GM12878 (cell line): ENCODE measurements at regions of chr17 and their contacts with region 1.

Region 1: DNA sequence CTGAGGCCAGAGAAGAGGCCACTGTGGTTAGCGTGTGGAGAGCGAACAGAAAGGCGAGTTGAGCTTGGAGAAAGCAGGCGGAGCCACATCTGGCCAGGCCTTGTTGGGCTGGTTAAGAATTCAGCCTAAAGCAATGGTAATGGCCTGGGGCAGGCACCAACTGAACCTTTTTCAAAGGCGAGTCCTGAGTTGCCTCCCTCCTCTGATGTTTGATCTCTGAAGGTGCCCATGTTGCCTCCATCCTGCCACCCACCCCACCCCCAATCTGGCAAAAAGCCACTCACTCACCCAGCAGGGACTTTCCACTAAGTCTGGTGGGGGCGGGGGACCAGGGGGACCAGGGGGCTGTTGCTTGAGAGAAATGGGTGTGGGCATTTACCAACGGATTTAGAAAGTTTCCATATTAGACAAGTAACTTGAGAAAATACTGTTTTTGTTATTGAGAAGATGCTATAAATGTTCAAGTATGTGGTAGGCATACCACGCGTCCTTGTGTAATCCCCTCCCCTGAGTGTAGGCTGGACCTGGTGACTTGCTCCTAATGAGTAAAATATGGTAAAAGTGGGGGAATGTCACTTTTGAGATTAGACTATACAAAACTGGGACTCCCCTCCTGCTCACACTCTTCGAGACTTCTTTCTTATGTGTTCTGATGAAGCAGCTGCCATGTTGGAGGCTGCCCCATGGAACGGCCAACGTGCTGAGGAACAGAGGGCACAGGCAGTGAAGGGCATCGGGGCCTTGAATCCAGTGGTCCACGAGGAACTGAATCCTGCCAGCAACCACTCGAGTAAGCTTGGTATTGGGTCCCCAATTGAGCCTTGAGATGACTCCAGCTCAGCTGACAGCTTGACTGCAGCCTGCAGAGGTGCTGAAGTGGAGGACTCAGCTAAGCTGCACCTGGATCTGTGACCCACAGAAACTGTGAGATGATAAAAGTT is 29.9 kb upstream of the TNS4 start:
- DNase-seq: peak; percentile 71
- ATAC-seq: peak; percentile 74
- H3K4me3 ChIP-seq: no peak overlapping the region
- H3K27ac ChIP-seq: peak overlapping the region; percentile 60; the same call in 1 of the 2 replicates
- H3K4me1 ChIP-seq: peaks cover 38% of the 10 kb centered on the region
- H3K27me3 ChIP-seq: no peaks in the 10 kb centered on the region
- CTCF ChIP-seq: no peak
- EP300 ChIP-seq: peak; percentile 6 to 14; a peak in 1 of 4 replicates
- POLR2A ChIP-seq: no peak
- RAD21 ChIP-seq: no peak

Region 2: GRCh38 chr17:40283662-40284061 is 247.7 kb before region 1 on chr17:
- CTCF ChIA-PET with region 1: no interaction called
- POLR2A ChIA-PET with region 1: no interaction called
- RAD21 ChIA-PET with region 1: no interaction called
- SMC1A ChIA-PET with region 1: no interaction called
- in situ Hi-C with region 1: no loop called
- intact Hi-C with region 1: no loop called
- DNase-seq: no peak
- ATAC-seq: peak; percentile 29
- H3K4me3 ChIP-seq: no peak overlapping the region
- H3K27ac ChIP-seq: no peak overlapping the region
- H3K4me1 ChIP-seq: no peaks in the 10 kb centered on the region
- H3K27me3 ChIP-seq: no peaks in the 10 kb centered on the region
- CTCF ChIP-seq: no peak
- EP300 ChIP-seq: no peak
- POLR2A ChIP-seq: no peak
- RAD21 ChIP-seq: no peak

Region 3: DNA sequence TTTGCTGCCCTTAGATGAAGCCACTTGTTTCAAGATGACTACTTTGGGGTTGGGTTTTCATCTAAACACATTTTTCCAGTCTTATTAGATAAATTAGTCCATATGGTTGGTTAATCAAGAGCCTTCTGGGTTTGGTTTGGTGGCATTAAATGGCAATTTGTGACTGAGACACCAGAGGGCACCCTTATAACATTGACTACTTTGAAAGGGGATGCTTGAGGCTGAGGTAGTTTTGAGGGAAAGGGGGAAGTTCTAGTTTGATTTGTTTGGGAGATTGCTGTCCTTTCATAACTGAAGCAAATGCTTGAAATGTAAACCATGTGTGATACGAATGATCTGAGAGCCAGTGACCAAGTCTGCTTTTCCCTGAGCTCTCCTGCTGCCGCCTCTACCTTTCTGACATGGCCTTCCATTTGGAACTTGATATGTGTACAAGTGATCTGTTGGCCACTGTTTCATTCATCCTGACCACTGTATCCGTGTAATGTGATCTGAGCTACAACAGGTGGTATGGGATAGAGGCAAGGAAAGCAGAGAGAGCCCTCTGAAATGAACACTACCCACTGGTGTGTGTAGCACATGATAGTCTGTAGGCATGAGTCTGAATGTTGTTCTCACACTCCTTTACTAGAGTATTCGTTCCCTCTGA is 228.2 kb before region 1 on chr17:
- CTCF ChIA-PET with region 1: interaction called, 23 read pairs
- POLR2A ChIA-PET with region 1: interaction called, 5 read pairs
- RAD21 ChIA-PET with region 1: interaction called, 9 read pairs
- SMC1A ChIA-PET with region 1: interaction called, 16 read pairs
- in situ Hi-C with region 1: loop called (anchors 5 kb)
- intact Hi-C with region 1: loop called (anchors 5 kb)
- DNase-seq: no peak
- ATAC-seq: peak; percentile 83
- H3K4me3 ChIP-seq: no peak overlapping the region
- H3K27ac ChIP-seq: no peak overlapping the region
- H3K4me1 ChIP-seq: peaks cover 5% of the 10 kb centered on the region; the same call in 1 of the 2 replicates
- H3K27me3 ChIP-seq: no peaks in the 10 kb centered on the region
- CTCF ChIP-seq: peak; percentile 62 to 80 (median 68); a peak in 5 of 6 replicates
- EP300 ChIP-seq: no peak
- POLR2A ChIP-seq: no peak; the same call in 1 of the 2 replicates
- RAD21 ChIP-seq: peak; percentile 96

Region 4: DNA sequence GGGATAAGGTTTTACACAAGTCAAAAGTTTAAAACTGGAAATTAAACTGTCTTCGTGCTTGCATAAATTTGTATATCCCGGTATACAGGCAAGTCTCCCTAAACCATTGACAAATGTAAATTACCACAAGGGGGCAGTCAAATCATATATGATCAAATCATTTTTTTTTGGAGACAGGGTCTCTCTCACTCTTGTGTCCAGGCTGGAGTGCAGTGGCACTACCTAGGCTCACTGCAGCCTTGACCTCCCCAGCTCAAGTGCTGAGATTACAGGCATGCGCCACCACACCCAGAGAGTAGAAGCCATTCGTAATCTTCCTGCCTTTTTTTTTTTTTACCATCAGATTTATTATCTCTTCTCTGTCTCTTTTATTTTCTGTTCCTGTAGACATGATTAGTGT is 132.1 kb before region 1 on chr17:
- CTCF ChIA-PET with region 1: interaction called, 72 read pairs
- POLR2A ChIA-PET with region 1: no interaction called
- RAD21 ChIA-PET with region 1: interaction called, 35 read pairs
- SMC1A ChIA-PET with region 1: interaction called, 59 read pairs
- in situ Hi-C with region 1: no loop called
- intact Hi-C with region 1: loop called (anchors 1 kb)
- DNase-seq: no peak
- ATAC-seq: peak; percentile 68
- H3K4me3 ChIP-seq: no peak overlapping the region
- H3K27ac ChIP-seq: no peak overlapping the region
- H3K4me1 ChIP-seq: no peaks in the 10 kb centered on the region
- H3K27me3 ChIP-seq: no peaks in the 10 kb centered on the region
- CTCF ChIP-seq: peak; percentile 21 to 51 (median 44); a peak in 4 of 6 replicates
- EP300 ChIP-seq: no peak
- POLR2A ChIP-seq: no peak
- RAD21 ChIP-seq: peak; percentile 54; the same call in 1 of the 2 replicates

Region 5: DNA sequence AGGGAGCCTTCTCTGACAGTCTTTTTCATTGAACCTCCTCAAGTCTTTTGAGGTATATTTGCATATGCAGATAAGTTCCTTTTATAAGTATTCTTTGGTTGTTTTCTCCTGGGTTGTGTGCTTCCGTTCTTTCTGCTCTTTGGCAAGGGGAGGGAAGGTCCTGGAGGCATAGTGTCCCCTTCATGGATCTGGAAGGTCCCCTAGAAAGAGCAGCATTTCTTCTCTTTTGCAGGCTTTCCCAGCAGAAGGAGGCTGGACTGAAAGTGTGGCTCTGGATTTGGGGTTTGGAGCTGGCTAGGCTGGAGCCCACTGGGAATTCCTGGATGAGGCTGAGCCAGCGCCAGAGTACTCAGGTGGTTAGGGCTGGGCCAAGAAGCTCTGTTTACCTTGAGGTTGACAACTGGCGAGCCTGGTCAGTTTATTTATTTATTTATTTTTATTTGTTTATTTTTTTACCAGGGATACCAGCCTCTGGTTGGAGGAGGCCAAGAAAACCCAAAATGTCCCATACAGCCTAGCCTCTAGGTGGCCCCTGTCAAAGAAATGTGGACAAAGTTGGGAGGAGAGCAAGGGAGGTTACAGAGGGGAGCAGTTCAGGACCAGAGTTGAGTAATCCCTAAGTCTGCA is 108.2 kb before region 1 on chr17:
- CTCF ChIA-PET with region 1: interaction called, 86 read pairs
- POLR2A ChIA-PET with region 1: interaction called, 21 read pairs
- RAD21 ChIA-PET with region 1: interaction called, 88 read pairs
- SMC1A ChIA-PET with region 1: interaction called, 106 read pairs
- in situ Hi-C with region 1: loop called (anchors 25 kb)
- intact Hi-C with region 1: no loop called
- DNase-seq: no peak
- ATAC-seq: no peak
- H3K4me3 ChIP-seq: no peak overlapping the region
- H3K27ac ChIP-seq: no peak overlapping the region
- H3K4me1 ChIP-seq: peaks cover 2% of the 10 kb centered on the region; the same call in 1 of the 2 replicates
- H3K27me3 ChIP-seq: no peaks in the 10 kb centered on the region; a peak in 1 of 4 replicates
- CTCF ChIP-seq: no peak; a peak in 1 of 6 replicates
- EP300 ChIP-seq: no peak
- POLR2A ChIP-seq: no peak
- RAD21 ChIP-seq: no peak

Region 6: DNA sequence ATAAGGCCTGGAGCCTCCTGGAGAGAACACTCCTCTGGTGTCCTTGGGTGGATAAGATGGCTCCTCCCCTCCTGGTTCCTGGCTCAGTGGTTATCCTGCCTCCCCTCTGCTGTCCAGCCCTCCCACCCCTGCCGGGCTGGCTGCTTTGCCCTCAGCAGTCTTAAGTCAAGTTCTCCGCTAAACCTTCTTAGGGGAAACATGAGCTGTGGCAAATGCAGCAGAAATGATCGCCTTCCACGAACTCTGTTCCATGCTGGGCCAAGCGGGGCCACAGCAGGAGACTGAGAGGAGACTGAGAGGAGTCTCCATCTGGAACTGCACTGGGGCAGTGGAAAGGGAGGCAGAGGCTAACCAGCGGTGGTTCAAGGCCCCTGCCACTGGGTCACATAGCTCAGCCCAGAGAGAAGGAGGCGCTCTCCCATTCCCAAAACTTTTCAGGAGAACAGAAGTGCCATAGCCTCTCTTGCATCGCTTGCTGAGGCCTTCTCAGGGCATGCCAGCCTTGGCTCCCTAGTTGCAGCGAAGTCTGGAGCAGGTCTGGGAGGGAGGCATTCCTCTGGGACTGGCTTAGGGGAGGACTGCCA is 56.8 kb before region 1 on chr17:
- CTCF ChIA-PET with region 1: interaction called, 128 read pairs
- POLR2A ChIA-PET with region 1: interaction called, 12 read pairs
- RAD21 ChIA-PET with region 1: interaction called, 131 read pairs
- SMC1A ChIA-PET with region 1: interaction called, 108 read pairs
- in situ Hi-C with region 1: no loop called
- intact Hi-C with region 1: loop called (anchors 1 kb)
- DNase-seq: no peak
- ATAC-seq: no peak
- H3K4me3 ChIP-seq: no peak overlapping the region
- H3K27ac ChIP-seq: no peak overlapping the region
- H3K4me1 ChIP-seq: no peaks in the 10 kb centered on the region
- H3K27me3 ChIP-seq: no peaks in the 10 kb centered on the region
- CTCF ChIP-seq: no peak
- EP300 ChIP-seq: no peak
- POLR2A ChIP-seq: no peak
- RAD21 ChIP-seq: no peak

Region 7: DNA sequence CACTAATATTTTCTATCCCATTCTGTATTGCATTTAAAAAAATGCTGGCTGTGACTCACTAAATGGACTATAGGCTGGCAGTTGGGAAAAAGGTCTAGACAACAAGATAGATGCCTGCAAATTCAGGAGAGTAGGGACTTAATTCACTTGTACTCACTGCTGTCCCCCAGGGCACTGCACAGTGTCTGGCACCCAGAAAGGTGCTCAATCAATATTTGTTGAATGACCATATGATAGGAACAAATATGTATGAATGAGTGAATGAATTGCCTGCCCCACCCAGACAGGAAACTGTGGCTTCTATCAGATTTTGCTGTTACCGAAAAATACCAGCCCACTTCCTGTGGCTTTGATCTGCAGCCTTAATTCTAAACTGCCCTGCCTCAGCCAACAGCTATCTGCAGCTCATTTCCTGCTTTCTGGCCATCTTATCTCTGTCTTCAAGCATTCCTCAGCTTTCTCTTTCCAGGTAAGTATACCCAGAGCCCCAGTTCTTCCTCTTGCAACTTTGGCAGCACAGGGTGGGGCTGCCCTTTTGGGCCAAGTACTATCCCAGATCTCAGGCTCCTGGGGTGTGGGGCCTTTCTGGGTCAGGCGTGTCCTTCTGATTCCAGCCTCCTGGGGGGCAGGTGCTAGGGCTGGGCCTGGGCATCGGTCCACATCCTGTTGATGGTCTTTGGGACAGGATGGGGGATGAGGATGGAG is 14.6 kb before region 1 on chr17:
- CTCF ChIA-PET with region 1: interaction called, 58 read pairs
- POLR2A ChIA-PET with region 1: interaction called, 41 read pairs
- RAD21 ChIA-PET with region 1: interaction called, 102 read pairs
- SMC1A ChIA-PET with region 1: interaction called, 120 read pairs
- in situ Hi-C with region 1: no loop called
- intact Hi-C with region 1: no loop called
- DNase-seq: peak; percentile 60
- ATAC-seq: peak; percentile 91
- H3K4me3 ChIP-seq: peak overlapping the region; percentile 38; the same call in 1 of the 2 replicates
- H3K27ac ChIP-seq: peak overlapping the region; percentile 64
- H3K4me1 ChIP-seq: peaks cover 18% of the 10 kb centered on the region
- H3K27me3 ChIP-seq: no peaks in the 10 kb centered on the region; a peak in 1 of 4 replicates
- CTCF ChIP-seq: no peak
- EP300 ChIP-seq: peak; percentile 44 to 60; a peak in 3 of 4 replicates
- POLR2A ChIP-seq: no peak
- RAD21 ChIP-seq: no peak

Region 8: DNA sequence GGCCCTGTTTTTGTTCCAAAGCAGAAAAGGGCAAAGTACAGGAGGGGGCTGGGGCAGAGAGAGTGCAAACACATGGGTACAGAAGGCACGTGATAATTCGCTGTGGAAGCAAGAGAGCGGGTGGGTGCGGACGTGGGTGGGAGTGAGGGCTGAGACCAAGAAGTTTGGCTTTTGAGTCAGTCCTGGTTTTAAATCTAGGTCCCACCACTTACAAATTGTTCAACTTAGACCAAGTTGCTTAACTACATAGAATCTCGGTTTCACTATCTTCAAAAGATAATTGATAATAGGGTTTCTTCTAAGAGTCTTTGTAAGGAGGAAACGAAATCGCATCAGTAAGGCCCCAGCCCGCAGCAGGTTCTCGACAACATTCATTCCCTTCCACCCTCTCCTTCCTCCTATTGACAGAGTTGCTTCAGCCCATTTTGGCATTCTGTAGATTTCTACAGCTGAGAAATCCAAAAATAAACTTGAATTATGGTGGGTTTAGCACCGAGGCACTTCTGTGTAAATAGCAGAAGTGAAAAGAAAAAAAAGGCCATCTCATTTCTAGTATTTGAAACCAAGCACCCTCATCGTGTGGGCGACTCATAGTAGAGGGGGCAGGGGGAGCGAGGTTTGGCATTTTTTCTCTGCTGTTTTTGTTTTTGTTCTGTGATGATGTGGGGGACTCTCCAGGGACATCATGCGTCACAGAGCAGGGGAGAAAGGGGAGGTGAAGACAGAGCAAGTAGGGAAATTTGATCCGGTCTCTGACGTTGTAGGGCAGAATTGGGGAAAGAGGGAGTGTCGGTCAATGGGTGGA is 67.5 kb after region 1 on chr17:
- CTCF ChIA-PET with region 1: interaction called, 23 read pairs
- POLR2A ChIA-PET with region 1: interaction called, 7 read pairs
- RAD21 ChIA-PET with region 1: interaction called, 9 read pairs
- SMC1A ChIA-PET with region 1: interaction called, 22 read pairs
- in situ Hi-C with region 1: no loop called
- intact Hi-C with region 1: no loop called
- DNase-seq: peak; percentile 97
- ATAC-seq: peak; percentile 59
- H3K4me3 ChIP-seq: peak overlapping the region; percentile 38; the same call in 1 of the 2 replicates
- H3K27ac ChIP-seq: peak overlapping the region; percentile 91
- H3K4me1 ChIP-seq: peaks cover 73% of the 10 kb centered on the region
- H3K27me3 ChIP-seq: no peaks in the 10 kb centered on the region
- CTCF ChIP-seq: no peak
- EP300 ChIP-seq: peak; percentile 98
- POLR2A ChIP-seq: no peak
- RAD21 ChIP-seq: peak; percentile 30